ENCODE measurements at regions of chr15 and their contacts with region 1.

Region 1: GRCh38 chr15:85582131-85583079 is 202.0 kb downstream of the AKAP13 start:
- DNase-seq: peak; percentile 45
- H3K4me3 Mint-ChIP-seq: peak overlapping the region; percentile 75
- H3K27ac Mint-ChIP-seq: peak overlapping the region; percentile 76
- H3K4me1 Mint-ChIP-seq: peaks cover 77% of the 10 kb centered on the region
- H3K27me3 Mint-ChIP-seq: no peaks in the 10 kb centered on the region
- CTCF ChIP-seq: no peak

Region 2: GRCh38 chr15:85515212-85515611 is 67.2 kb before region 1 on chr15:
- CTCF ChIA-PET with region 1: no interaction called
- intact Hi-C with region 1: loop called (anchors 2 kb)
- DNase-seq: peak; percentile 19
- H3K4me3 Mint-ChIP-seq: peak overlapping the region; percentile 33
- H3K27ac Mint-ChIP-seq: peak overlapping the region; percentile 66
- H3K4me1 Mint-ChIP-seq: peaks cover 62% of the 10 kb centered on the region
- H3K27me3 Mint-ChIP-seq: no peaks in the 10 kb centered on the region
- CTCF ChIP-seq: no peak

Region 3: GRCh38 chr15:85543741-85544155 is 38.7 kb before region 1 on chr15:
- CTCF ChIA-PET with region 1: interaction called, 19 read pairs
- intact Hi-C with region 1: loop called (anchors 2 kb)
- DNase-seq: peak; percentile 56
- H3K4me3 Mint-ChIP-seq: peak overlapping the region; percentile 25
- H3K27ac Mint-ChIP-seq: peak overlapping the region; percentile 70
- H3K4me1 Mint-ChIP-seq: peaks cover 84% of the 10 kb centered on the region
- H3K27me3 Mint-ChIP-seq: no peaks in the 10 kb centered on the region
- CTCF ChIP-seq: no peak

Region 4: GRCh38 chr15:85563328-85563727 is 19.1 kb before region 1 on chr15:
- CTCF ChIA-PET with region 1: interaction called, 7 read pairs
- intact Hi-C with region 1: loop called (anchors 1 kb)
- DNase-seq: peak; percentile 52
- H3K4me3 Mint-ChIP-seq: peak overlapping the region; percentile 17
- H3K27ac Mint-ChIP-seq: peak overlapping the region; percentile 80
- H3K4me1 Mint-ChIP-seq: peaks cover 40% of the 10 kb centered on the region
- H3K27me3 Mint-ChIP-seq: no peaks in the 10 kb centered on the region
- CTCF ChIP-seq: no peak

Region 5: DNA sequence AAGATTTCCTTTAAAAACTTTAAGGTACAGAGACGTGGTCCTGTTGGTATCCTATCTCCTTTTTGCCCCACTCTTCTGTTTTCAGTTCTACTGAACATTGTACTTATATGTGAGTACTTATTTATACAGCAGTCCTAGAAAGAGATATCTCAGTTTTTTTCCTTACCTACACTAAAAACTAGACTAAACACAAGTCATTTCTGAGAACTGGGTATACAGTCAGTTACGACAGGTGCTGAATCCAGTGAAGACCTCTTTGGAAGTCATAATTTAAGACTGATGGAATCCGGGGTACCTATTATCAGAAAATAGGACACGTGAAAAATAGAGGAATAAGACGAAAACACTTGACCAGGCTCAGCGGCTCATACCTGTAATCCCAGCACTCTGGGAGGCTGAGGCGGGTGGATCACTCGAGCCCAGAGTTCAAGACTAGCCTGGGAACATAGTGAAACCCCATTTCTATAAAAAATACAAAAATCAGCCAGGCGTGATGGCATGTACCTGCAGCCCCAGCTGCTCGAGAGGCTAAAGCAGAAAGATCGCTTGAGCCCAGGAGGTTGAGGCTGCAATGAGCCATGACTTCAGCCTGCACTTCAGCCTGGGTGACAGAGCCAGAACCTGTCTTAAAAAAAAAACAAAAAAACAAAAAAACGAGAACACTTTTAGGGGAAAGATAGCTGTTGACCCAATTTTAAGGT is 136.0 kb after region 1 on chr15:
- CTCF ChIA-PET with region 1: no interaction called
- intact Hi-C with region 1: no loop called
- DNase-seq: no peak
- H3K4me3 Mint-ChIP-seq: no peak overlapping the region
- H3K27ac Mint-ChIP-seq: no peak overlapping the region
- H3K4me1 Mint-ChIP-seq: no peaks in the 10 kb centered on the region
- H3K27me3 Mint-ChIP-seq: no peaks in the 10 kb centered on the region
- CTCF ChIP-seq: no peak

Measured in Calu3 (cell line).